ENCODE measurements at regions of chr13 and their contacts with region 1.

Region 1: GRCh38 chr13:79782541-79783205 is 301.7 kb downstream of the NDFIP2 start:
- DNase-seq: peak; percentile 62 to 88 (median 73)
- ATAC-seq: peak; percentile 96 to 99 (median 98)
- H3K4me3 ChIP-seq: peak overlapping the region in 2 of 12 donors; percentile 12 to 15
- H3K27ac ChIP-seq: peak overlapping the region in 7 of 12 donors; percentile 9 to 47 (median 25)
- H3K4me1 ChIP-seq: peaks cover 0 to 29% (median 9%) of the 10 kb centered on the region in 12 donors
- H3K27me3 ChIP-seq: no peaks in the 10 kb centered on the region
- CTCF ChIP-seq: no peak
- POLR2A ChIP-seq: no peak

Region 2: DNA sequence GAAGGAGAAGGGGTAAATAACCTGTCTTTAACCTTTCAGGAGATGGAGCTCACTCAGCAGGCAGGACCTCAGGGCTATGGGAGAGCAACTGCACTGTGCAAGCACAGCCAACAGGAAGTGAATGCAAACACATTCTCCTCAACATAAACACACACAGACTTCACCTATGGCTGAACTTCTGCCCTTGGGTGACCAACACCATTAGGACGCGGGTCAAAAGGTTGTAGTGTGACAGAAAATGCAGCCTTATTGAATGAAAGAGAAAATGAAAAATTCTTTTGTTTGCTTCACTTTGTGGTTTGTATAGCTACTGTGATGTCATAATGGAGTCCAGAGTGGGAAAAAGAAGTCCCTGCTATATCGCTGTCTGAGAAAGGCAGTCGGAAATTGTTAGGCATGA is 21.3 kb after region 1 on chr13:
- intact Hi-C with region 1: no loop called
- DNase-seq: no peak
- ATAC-seq: no peak
- H3K4me3 ChIP-seq: no peak overlapping the region
- H3K27ac ChIP-seq: no peak overlapping the region
- H3K4me1 ChIP-seq: peaks cover 0 to 13% (median 3%) of the 10 kb centered on the region in 12 donors
- H3K27me3 ChIP-seq: no peaks in the 10 kb centered on the region
- CTCF ChIP-seq: no peak
- POLR2A ChIP-seq: no peak

Region 3: GRCh38 chr13:80141123-80141849 is 358.6 kb after region 1 on chr13:
- intact Hi-C with region 1: loop called in 1 of 10 experiments (anchors 5 kb)
- DNase-seq: peak in 4 of 5 donors; percentile 71 to 79 (median 76)
- ATAC-seq: peak; percentile 95 to 97 (median 96)
- H3K4me3 ChIP-seq: peak overlapping the region in 6 of 12 donors; percentile 1 to 18 (median 10)
- H3K27ac ChIP-seq: peak overlapping the region in 11 of 12 donors; percentile 14 to 79 (median 67)
- H3K4me1 ChIP-seq: peaks cover 0 to 54% (median 25%) of the 10 kb centered on the region in 12 donors
- H3K27me3 ChIP-seq: no peaks in the 10 kb centered on the region
- CTCF ChIP-seq: no peak
- POLR2A ChIP-seq: no peak

Measured in heart left ventricle (tissue), 16 donors.